ENCODE measurements at regions of chr2 and their contacts with region 1.

Region 1: DNA sequence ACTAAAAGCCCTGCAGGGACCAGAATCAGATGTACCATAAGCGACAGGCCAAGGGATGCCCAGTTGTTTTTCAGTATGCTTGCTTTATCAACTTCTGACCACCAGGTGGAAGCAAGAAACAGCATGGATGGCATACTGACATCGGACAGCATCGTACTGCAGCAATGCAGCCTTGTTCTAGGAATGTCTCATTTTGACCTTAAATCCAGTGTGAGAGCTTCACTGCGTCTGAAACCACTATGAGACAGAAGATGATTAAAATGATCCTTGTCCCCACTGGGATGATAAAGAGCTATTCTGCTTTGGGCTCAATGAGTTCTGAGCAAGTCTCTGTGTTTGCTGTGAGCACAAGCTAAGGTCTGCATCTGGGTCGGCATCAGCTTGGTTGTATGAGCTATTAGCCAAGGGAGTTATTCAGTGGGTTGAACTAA is 54.3 kb downstream of the CDK15 start:
- DNase-seq: peak in 1 of 2 donors; percentile 28
- H3K4me3 ChIP-seq: no peak overlapping the region
- H3K27ac ChIP-seq: no peak overlapping the region
- H3K4me1 ChIP-seq: no peaks in the 10 kb centered on the region
- H3K27me3 ChIP-seq: no peaks in the 10 kb centered on the region
- CTCF ChIP-seq: peak; percentile 75 to 87

Region 2: DNA sequence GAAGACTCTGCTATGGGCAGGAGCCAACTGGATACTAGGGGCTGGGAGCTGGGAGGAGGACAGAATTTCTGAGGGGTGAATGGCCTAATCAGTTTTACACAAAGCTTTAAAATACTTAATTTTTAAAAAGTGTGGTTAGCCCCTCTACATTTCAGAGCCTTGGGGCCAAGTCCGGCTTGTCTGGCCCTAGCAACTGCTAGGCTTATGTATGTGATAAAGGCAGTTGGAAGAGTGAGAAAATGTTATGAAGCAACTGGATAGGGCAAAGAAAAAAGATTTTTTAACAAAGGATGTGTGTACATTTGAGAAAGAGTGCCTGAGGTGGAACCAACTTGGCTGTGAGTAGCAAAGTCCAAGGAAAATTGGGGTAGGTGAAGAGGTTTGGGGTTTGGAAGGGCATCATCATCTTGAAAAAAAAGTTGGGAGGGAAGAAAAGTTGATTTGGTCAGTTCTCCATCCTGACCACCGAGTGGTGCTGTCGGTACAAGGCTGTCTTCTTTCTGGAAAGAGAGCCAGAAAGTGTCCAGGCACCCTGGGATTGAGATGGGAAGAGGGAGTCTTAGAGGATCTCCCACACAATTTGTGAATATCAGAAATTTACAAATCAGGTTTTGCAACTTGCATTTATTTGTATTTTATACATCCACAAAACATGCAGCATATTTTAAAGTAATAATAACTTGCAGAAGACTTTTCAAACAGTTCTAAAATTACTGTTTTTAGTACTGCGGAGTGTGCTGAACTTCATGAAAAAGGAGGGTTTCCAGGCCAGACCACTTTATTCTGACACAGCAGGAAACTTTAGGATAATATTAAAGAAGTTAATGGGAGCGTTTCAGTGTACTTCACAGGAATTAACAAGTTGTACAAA is 64.8 kb before region 1 on chr2:
- intact Hi-C with region 1: loop called (anchors 5 kb)
- DNase-seq: no peak
- H3K4me3 ChIP-seq: no peak overlapping the region
- H3K27ac ChIP-seq: peak overlapping the region in 1 of 2 donors; percentile 67
- H3K4me1 ChIP-seq: peaks cover 0 to 30% (median 1%) of the 10 kb centered on the region in 4 donors
- H3K27me3 ChIP-seq: no peaks in the 10 kb centered on the region
- CTCF ChIP-seq: peak; percentile 62 to 69

Measured in tibial artery (tissue), 4 donors.